Activated T-helper 1 cell treated with anti-CD3 and anti-CD28 coated beads, Interleukin-12 subunit alpha, Interleukin-12 subunit beta, Interleukin-2, Interleukin-4 antibody, amounts not matched to agents 30 ng/mL and 10 ng/mL and 1 ng/mL, durations not matched to agents 14 hours and 24 hours and 36 hours (primary cell): ENCODE measurements at regions of chr19 and their contacts with region 1.

Region 1: GRCh38 chr19:32599736-32600157 is 18.8 kb downstream of the PDCD5 start:
- DNase-seq: peak; percentile 21
- H3K4me3 Mint-ChIP-seq: no peak overlapping the region
- H3K27ac Mint-ChIP-seq: no peak overlapping the region
- H3K4me1 Mint-ChIP-seq: peaks cover 8% of the 10 kb centered on the region
- H3K27me3 Mint-ChIP-seq: no peaks in the 10 kb centered on the region

Region 2: GRCh38 chr19:32642771-32643170 is 43.0 kb after region 1 on chr19:
- intact Hi-C with region 1: loop called (anchors 5 kb)
- DNase-seq: peak; percentile 49
- H3K4me3 Mint-ChIP-seq: no peak overlapping the region
- H3K27ac Mint-ChIP-seq: peak overlapping the region; percentile 66
- H3K4me1 Mint-ChIP-seq: peaks cover 25% of the 10 kb centered on the region
- H3K27me3 Mint-ChIP-seq: no peaks in the 10 kb centered on the region

Region 3: DNA sequence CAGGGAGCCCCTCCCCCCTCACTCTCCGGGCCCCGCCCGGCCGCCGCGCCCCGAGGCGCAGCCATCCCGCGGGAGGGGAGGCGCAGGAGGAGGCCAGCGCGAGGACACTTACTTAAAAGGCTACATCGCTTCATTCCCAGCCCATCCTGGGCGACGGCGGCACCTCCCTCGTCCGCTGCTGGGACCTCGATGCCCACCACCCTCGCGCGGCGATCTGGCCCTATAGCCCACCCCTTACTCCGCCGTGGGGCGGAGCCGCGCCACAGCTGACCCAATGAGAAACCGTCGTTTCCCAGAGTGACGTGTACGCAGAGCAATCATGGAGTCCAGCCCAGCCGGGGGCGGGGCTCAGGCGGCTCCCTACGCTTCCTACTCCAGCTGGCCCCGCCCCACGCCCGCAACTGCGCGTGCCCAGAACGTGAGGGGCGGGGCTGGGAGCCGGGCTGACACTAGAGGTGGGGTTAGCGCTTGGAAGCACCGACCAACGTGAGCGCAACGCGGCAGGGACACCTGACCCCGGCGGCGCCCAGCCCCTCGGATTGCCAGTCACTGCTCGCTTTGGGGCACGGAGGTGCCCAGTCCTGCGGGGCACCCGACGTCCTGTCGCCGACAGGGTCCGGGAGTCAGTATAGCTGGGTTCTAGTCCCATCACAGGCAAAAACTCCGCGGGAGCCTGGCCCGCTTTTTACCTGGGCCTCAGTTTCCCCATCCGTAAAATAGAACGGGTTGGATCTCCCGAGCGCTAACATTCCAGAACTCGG is 75.4 kb after region 1 on chr19 and contains the start of gene ANKRD27:
- intact Hi-C with region 1: loop called (anchors 2 kb)
- DNase-seq: peak; percentile 98
- H3K4me3 Mint-ChIP-seq: peak within 1 kb of the TSS; percentile 89
- H3K27ac Mint-ChIP-seq: peak within 1 kb of the TSS; percentile 89
- H3K4me1 Mint-ChIP-seq: peaks cover 28% of the 10 kb centered on the region
- H3K27me3 Mint-ChIP-seq: peaks cover 31% of the 10 kb centered on the region
- total RNA-seq, gene ANKRD27: 28.2 and 28.7 TPM in 2 replicates

Region 4: DNA sequence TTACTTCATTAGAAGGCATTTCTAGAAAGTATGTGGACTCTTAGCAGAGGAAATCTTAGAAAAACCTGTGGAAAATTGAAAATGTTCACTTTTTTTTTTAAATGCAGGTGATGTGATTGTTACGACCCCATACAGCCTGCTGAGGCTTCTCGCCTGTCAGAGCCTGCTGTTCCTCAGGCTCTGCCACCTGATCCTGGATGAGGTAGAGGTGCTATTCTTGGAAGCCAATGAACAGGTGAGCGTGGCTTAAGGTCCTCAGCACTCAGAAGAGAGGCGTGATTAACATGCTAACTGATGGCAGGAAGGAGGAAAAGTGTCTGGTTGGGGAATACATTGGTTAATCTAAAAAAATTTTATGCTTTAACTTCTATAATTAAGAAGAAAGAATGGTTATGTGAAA is 198.5 kb after region 1 on chr19:
- intact Hi-C with region 1: loop called (anchors 1 kb)
- DNase-seq: no peak
- H3K4me3 Mint-ChIP-seq: no peak overlapping the region
- H3K27ac Mint-ChIP-seq: no peak overlapping the region
- H3K4me1 Mint-ChIP-seq: peaks cover 23% of the 10 kb centered on the region
- H3K27me3 Mint-ChIP-seq: no peaks in the 10 kb centered on the region

Region 5: GRCh38 chr19:33118643-33119042 is 518.9 kb after region 1 on chr19:
- intact Hi-C with region 1: loop called (anchors 1 kb)
- DNase-seq: no peak
- H3K4me3 Mint-ChIP-seq: no peak overlapping the region
- H3K27ac Mint-ChIP-seq: no peak overlapping the region
- H3K4me1 Mint-ChIP-seq: no peaks in the 10 kb centered on the region
- H3K27me3 Mint-ChIP-seq: no peaks in the 10 kb centered on the region